ENCODE measurements at regions of chr1 and their contacts with region 1.

Region 1: GRCh38 chr1:62436466-62437256 is at the start of gene USP1:
- DNase-seq: peak; percentile 99
- H3K4me3 ChIP-seq: peak within 1 kb of the TSS; percentile 63 to 92
- H3K27ac ChIP-seq: peak within 1 kb of the TSS; percentile 95 to 98
- H3K4me1 ChIP-seq: peaks cover 0 to 42% (median 25%) of the 10 kb centered on the region in 4 donors
- H3K27me3 ChIP-seq: no peaks in the 10 kb centered on the region
- CTCF ChIP-seq: peak in 1 of 2 experiments; percentile 2

Region 2: GRCh38 chr1:61732726-61733125 is 703.9 kb before region 1 on chr1:
- intact Hi-C with region 1: loop called (anchors 5 kb)
- DNase-seq: no peak
- H3K4me3 ChIP-seq: no peak overlapping the region
- H3K27ac ChIP-seq: no peak overlapping the region
- H3K4me1 ChIP-seq: no peaks in the 10 kb centered on the region
- H3K27me3 ChIP-seq: no peaks in the 10 kb centered on the region
- CTCF ChIP-seq: no peak

Region 3: GRCh38 chr1:62687903-62688686 is 251.4 kb after region 1 on chr1 and contains the start of gene DOCK7:
- intact Hi-C with region 1: loop called (anchors 5 kb)
- DNase-seq: peak; percentile 70 to 88
- H3K4me3 ChIP-seq: peak within 1 kb of the TSS; percentile 72 to 79
- H3K27ac ChIP-seq: peak within 1 kb of the TSS; percentile 83 to 96
- H3K4me1 ChIP-seq: peaks cover 0 to 55% (median 30%) of the 10 kb centered on the region in 4 donors
- H3K27me3 ChIP-seq: no peaks in the 10 kb centered on the region
- CTCF ChIP-seq: no peak